MCF 10A (cell line): ENCODE measurements at regions of chr12 and their contacts with region 1.

Region 1: GRCh38 chr12:105420659-105421240 is 90.3 kb downstream of the C12orf75 start:
- DNase-seq: peak; percentile 74
- H3K4me3 Mint-ChIP-seq: no peak overlapping the region
- H3K27ac Mint-ChIP-seq: no peak overlapping the region
- H3K4me1 Mint-ChIP-seq: peaks cover 40% of the 10 kb centered on the region
- H3K27me3 Mint-ChIP-seq: no peaks in the 10 kb centered on the region
- CTCF ChIP-seq: peak; percentile 86

Region 2: DNA sequence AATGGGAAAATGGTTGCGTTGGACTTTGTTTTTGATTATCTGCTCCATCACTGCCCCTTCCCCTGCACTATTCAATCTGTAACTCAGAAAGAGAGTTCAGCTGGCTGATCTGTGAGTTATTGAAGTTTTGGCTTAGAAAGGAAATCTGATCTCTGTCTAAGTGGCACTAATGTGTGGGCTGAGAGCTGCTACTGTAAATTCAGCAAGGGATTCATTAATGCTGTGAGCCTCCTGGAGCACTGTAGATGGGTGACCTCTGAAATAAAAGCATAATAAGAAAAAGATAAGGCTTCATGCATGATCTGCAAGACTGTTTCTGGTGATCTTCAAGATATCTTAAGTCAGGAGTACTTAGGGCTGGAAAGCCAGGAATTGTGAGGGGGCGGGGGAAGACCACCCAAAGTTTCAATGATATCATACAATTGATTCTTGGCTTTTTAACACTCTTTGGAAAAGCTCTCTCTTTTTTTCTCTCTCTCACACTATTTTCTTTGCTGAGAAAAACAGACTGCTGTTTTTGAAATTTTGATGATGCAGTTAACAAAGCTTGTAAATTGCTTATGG is 10.9 kb after region 1 on chr12:
- CTCF ChIA-PET with region 1: interaction called, 12 read pairs
- POLR2A ChIA-PET with region 1: interaction called, 3 read pairs
- intact Hi-C with region 1: no loop called
- DNase-seq: no peak
- H3K4me3 Mint-ChIP-seq: no peak overlapping the region
- H3K27ac Mint-ChIP-seq: no peak overlapping the region
- H3K4me1 Mint-ChIP-seq: peaks cover 22% of the 10 kb centered on the region
- H3K27me3 Mint-ChIP-seq: no peaks in the 10 kb centered on the region
- CTCF ChIP-seq: no peak

Region 3: DNA sequence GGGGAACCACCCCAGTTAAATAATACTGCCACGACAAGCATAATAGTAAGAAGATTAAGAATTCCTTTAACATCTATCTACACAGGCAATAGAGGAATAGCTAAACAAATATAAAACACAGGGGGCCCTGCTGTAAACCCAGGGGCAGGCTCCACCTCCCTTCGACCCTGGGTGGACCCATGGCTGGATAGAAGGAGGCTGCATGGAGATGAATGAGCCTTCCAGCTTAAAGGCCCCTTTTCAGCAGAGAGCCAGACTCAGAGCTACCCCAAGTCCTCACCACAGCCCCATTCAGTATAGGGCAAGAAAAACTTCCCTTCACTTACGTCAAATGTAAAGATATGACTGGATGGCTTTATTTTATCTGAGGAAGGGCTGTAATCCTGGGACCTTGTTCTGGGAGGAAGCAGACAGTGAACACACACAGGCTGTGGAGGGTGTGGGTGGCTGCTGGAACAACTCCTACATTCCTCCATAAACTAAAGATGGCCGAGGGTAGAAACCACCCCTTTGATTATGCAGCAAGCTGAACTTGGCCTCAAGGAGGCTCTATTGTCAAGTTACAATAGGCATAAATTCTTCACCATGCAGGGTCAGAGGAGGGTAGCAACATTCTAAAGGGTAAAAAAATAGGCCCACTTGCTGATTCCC is 687.6 kb after region 1 on chr12:
- CTCF ChIA-PET with region 1: interaction called, 15 read pairs
- POLR2A ChIA-PET with region 1: interaction called, 4 read pairs
- intact Hi-C with region 1: no loop called
- DNase-seq: peak; percentile 36
- H3K4me3 Mint-ChIP-seq: peak overlapping the region; percentile 2
- H3K27ac Mint-ChIP-seq: peak overlapping the region; percentile 71
- H3K4me1 Mint-ChIP-seq: peaks cover 46% of the 10 kb centered on the region
- H3K27me3 Mint-ChIP-seq: no peaks in the 10 kb centered on the region
- CTCF ChIP-seq: no peak

Region 4: GRCh38 chr12:106149096-106149784 is 728.5 kb after region 1 on chr12:
- CTCF ChIA-PET with region 1: interaction called, 46 read pairs
- POLR2A ChIA-PET with region 1: interaction called, 5 read pairs
- intact Hi-C with region 1: loop called (anchors 1 kb)
- DNase-seq: peak; percentile 57
- H3K4me3 Mint-ChIP-seq: no peak overlapping the region
- H3K27ac Mint-ChIP-seq: no peak overlapping the region
- H3K4me1 Mint-ChIP-seq: no peaks in the 10 kb centered on the region
- H3K27me3 Mint-ChIP-seq: no peaks in the 10 kb centered on the region
- CTCF ChIP-seq: peak; percentile 60